Activated CD8-positive, alpha-beta memory T cell treated with anti-CD3 and anti-CD28 coated beads, Interleukin-2, amount 10 ng/mL, durations not matched to agents 7 days and 5 days (primary cell): ENCODE measurements at regions of chr9 and their contacts with region 1.

Region 1: GRCh38 chr9:33623658-33624586 is 99.9 kb downstream of the ANKRD18B start:
- DNase-seq: peak; percentile 77
- ATAC-seq: peak; percentile 98
- H3K4me3 Mint-ChIP-seq: no peak overlapping the region
- H3K27ac Mint-ChIP-seq: no peak overlapping the region
- H3K4me1 Mint-ChIP-seq: peaks cover 5% of the 10 kb centered on the region
- H3K27me3 Mint-ChIP-seq: peaks cover 30% of the 10 kb centered on the region

Region 2: DNA sequence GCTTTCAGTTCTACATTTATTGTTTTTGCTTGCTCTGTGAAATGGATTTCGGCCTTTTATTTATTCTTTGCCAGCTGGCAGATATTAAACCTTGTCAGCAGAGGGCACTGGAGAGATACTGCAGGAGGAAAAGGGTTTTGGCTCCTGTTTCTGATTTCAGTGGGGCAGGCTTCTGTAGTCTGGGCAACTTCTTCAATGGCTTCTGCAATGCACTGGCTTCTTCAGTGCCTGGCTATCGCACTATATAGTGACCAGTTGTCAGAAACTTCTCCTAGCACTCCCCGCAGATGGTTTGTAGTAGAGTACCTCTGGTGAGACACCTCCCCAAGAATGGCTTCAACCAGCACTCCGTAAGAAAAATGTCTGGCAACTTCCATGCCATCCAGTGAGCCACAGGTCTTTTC is 336.8 kb before region 1 on chr9:
- CTCF ChIA-PET with region 1: no interaction called
- DNase-seq: peak; percentile 73
- ATAC-seq: no peak
- H3K4me3 Mint-ChIP-seq: no peak overlapping the region
- H3K27ac Mint-ChIP-seq: peak overlapping the region; percentile 79
- H3K4me1 Mint-ChIP-seq: peaks cover 35% of the 10 kb centered on the region
- H3K27me3 Mint-ChIP-seq: peaks cover 2% of the 10 kb centered on the region

Region 3: GRCh38 chr9:33638391-33638915 is 14.5 kb after region 1 on chr9:
- CTCF ChIA-PET with region 1: interaction called, 15 read pairs
- DNase-seq: no peak
- ATAC-seq: no peak
- H3K4me3 Mint-ChIP-seq: no peak overlapping the region
- H3K27ac Mint-ChIP-seq: no peak overlapping the region
- H3K4me1 Mint-ChIP-seq: no peaks in the 10 kb centered on the region
- H3K27me3 Mint-ChIP-seq: peaks cover 85% of the 10 kb centered on the region

Region 4: GRCh38 chr9:33721674-33722358 is 97.9 kb after region 1 on chr9:
- CTCF ChIA-PET with region 1: interaction called, 221 read pairs
- DNase-seq: peak; percentile 86
- ATAC-seq: peak; percentile 77
- H3K4me3 Mint-ChIP-seq: no peak overlapping the region
- H3K27ac Mint-ChIP-seq: no peak overlapping the region
- H3K4me1 Mint-ChIP-seq: peaks cover 1% of the 10 kb centered on the region
- H3K27me3 Mint-ChIP-seq: peaks cover 33% of the 10 kb centered on the region

Region 5: GRCh38 chr9:33737811-33738606 is 114.1 kb after region 1 on chr9:
- CTCF ChIA-PET with region 1: interaction called, 14 read pairs
- DNase-seq: peak; percentile 62
- ATAC-seq: peak; percentile 76
- H3K4me3 Mint-ChIP-seq: no peak overlapping the region
- H3K27ac Mint-ChIP-seq: no peak overlapping the region
- H3K4me1 Mint-ChIP-seq: peaks cover 4% of the 10 kb centered on the region
- H3K27me3 Mint-ChIP-seq: peaks cover 13% of the 10 kb centered on the region

Region 6: DNA sequence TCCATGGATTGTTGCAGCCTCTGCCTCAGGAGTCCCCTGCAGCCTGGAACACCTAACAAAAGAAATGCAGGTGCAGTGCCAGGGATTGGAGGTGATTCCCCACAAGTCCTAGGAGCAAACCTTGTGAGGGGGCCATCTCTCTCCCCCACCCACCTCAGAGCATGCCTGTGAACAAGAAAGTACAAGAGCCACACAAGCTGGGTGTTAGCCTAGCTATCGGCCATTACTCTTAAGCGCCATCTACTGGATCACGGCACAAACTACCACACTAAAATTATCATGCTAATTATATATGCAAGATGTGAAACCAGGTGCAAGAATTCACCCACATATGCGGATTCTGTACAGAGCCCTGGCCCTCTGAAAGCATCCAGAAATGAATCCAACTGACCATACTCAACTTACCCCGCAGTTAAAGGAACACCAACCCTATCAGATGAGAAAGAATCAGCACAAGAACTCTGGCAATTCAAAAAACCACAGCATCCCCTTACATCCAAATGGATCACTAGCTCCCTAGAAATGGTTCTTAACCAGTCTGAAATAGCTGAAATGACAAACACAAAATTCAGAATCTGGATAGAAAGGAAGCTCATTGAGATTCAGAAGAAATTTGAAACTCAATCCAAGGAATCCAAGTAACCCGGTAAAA is 154.9 kb after region 1 on chr9:
- CTCF ChIA-PET with region 1: interaction called, 13 read pairs
- DNase-seq: peak; percentile 68
- ATAC-seq: peak; percentile 80
- H3K4me3 Mint-ChIP-seq: no peak overlapping the region
- H3K27ac Mint-ChIP-seq: no peak overlapping the region
- H3K4me1 Mint-ChIP-seq: peaks cover 12% of the 10 kb centered on the region
- H3K27me3 Mint-ChIP-seq: peaks cover 24% of the 10 kb centered on the region